ENCODE measurements at regions of chr5 and their contacts with region 1.

Region 1: GRCh38 chr5:93599399-93600120 is 16.5 kb downstream of the NR2F1 start:
- DNase-seq: peak; percentile 44
- H3K4me3 ChIP-seq: no peak overlapping the region; a peak in 1 of 4 replicates
- H3K27ac ChIP-seq: peak overlapping the region; percentile 61 to 94
- H3K4me1 ChIP-seq: peaks cover 6 to 20% of the 10 kb centered on the region in 2 experiments; a peak in 2 of 4 replicates
- H3K27me3 ChIP-seq: no peaks in the 10 kb centered on the region
- CTCF ChIP-seq: no peak
- EP300 ChIP-seq: no peak
- RAD21 ChIP-seq: no peak

Region 2: DNA sequence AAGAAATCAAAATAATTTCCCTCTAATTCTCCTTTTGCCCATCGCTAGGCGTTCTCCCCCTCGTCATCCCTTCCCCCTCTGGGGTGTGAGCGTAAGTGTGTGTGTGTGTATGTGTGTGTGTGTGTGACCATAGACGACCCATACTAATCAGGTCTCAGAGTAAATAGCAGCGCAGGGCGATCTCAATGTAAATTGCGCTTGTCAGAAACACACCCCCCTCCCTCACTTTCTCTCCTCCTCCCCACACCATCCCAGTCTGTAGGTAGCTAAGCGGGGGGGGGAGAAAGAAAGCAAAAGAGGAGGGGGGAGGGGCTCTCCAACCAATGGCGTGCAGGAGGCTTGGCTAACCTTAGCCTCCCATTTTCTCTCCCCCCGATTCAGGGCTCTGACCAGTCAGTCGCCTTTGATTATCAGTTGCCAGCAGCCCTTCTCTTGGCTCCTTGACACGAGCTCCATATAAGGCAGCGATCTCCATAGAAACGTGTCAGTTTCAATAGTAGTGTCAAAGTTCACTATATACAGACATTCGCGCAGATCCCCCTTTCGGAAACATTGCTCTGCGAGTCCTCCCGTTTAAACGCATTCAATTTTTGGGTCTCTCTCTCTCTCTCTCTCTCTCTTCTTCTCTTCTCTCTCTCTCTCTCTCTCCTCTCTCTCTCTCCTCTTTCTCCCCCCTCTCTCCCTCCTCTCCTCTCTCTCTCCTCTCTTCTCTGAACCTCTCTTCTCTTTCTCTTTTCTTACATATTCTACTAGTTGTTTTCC is 16.7 kb before region 1 on chr5 and contains the start of gene NR2F1:
- CTCF ChIA-PET with region 1: interaction called, 32 read pairs
- POLR2A ChIA-PET with region 1: interaction called, 10 read pairs
- DNase-seq: peak; percentile 80
- H3K4me3 ChIP-seq: peak within 1 kb of the TSS; percentile 74 to 87
- H3K27ac ChIP-seq: peak within 1 kb of the TSS; percentile 92
- H3K4me1 ChIP-seq: peaks cover 5 to 6% of the 10 kb centered on the region in 2 experiments; a peak in 3 of 4 replicates
- H3K27me3 ChIP-seq: no peaks in the 10 kb centered on the region
- CTCF ChIP-seq: peak; percentile 27; the same call in 1 of the 2 replicates
- EP300 ChIP-seq: peak; percentile 49 to 66; a peak in 3 of 4 replicates
- RAD21 ChIP-seq: no peak; the same call in 1 of the 2 replicates
- polyA plus RNA-seq, gene NR2F1: 40.0 and 47.1 TPM in 2 replicates

Region 3: GRCh38 chr5:93658044-93658443 is 58.5 kb after region 1 on chr5:
- CTCF ChIA-PET with region 1: no interaction called
- POLR2A ChIA-PET with region 1: no interaction called
- DNase-seq: no peak
- H3K4me3 ChIP-seq: no peak overlapping the region
- H3K27ac ChIP-seq: no peak overlapping the region
- H3K4me1 ChIP-seq: no peaks in the 10 kb centered on the region; a peak in 2 of 4 replicates
- H3K27me3 ChIP-seq: no peaks in the 10 kb centered on the region
- CTCF ChIP-seq: no peak
- EP300 ChIP-seq: no peak; a peak in 1 of 4 replicates
- RAD21 ChIP-seq: no peak

Measured in SK-N-SH (cell line).